H1 (cell line): ENCODE measurements at regions of chr1 and their contacts with region 1.

Region 1: DNA sequence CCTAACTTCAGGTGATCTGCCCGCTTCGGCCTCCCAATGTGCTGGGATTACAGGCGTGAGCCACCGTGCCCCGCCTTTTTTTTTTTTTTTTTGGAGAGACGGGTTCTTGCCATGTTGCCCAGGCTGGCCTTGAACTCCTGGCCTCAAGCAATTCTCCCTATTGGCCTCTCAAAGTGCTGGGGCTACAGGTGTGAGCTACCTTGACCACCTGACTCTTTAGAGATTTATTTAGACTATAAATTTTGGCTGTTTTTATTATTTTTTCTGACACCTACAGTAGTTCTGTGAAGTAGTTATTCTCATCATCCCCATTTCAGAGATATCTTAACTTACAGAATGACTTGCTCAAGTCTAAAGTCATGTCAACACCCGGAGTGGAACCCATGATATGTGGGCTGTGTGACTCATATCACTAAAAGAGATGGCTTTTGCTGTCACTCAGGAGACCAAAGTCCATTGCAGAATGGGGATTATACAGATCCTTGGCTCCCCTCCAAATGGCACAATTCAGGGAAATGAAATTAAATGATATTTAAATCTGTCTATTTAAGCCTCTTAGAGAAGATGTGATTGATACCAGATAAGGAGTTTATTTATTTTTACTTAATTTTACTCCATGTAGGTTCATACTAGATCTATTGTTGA is 93.2 kb downstream of the CTH start:
- DNase-seq: no peak
- H3K4me3 ChIP-seq: no peak overlapping the region
- H3K27ac ChIP-seq: no peak overlapping the region
- H3K4me1 ChIP-seq: no peaks in the 10 kb centered on the region
- H3K27me3 ChIP-seq: no peaks in the 10 kb centered on the region
- CTCF ChIP-seq: no peak
- EP300 ChIP-seq: no peak
- POLR2A ChIP-seq: no peak
- RAD21 ChIP-seq: no peak

Region 2: DNA sequence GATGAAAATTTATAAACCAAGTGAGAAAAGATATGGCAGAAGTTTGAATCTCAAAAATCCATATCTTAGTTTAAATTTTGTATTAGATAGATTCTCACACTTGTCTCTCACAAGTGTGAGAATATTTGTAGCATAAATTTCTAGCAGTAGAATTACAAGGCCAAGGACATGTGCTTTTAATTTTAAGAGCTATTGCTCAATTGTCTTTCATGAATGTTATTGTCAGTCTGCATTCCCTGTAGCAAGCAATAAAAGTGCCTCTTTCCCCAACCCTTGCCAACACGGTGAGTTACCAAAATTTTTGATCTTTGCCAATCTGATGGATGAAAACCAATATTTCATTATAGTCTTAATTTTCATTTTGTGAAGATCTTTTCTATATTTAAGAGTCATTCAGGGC is 29.3 kb before region 1 on chr1:
- CTCF ChIA-PET with region 1: no interaction called
- POLR2A ChIA-PET with region 1: no interaction called
- DNase-seq: no peak
- H3K4me3 ChIP-seq: no peak overlapping the region
- H3K27ac ChIP-seq: no peak overlapping the region
- H3K4me1 ChIP-seq: no peaks in the 10 kb centered on the region
- H3K27me3 ChIP-seq: no peaks in the 10 kb centered on the region
- CTCF ChIP-seq: no peak
- EP300 ChIP-seq: no peak
- POLR2A ChIP-seq: no peak
- RAD21 ChIP-seq: no peak

Region 3: DNA sequence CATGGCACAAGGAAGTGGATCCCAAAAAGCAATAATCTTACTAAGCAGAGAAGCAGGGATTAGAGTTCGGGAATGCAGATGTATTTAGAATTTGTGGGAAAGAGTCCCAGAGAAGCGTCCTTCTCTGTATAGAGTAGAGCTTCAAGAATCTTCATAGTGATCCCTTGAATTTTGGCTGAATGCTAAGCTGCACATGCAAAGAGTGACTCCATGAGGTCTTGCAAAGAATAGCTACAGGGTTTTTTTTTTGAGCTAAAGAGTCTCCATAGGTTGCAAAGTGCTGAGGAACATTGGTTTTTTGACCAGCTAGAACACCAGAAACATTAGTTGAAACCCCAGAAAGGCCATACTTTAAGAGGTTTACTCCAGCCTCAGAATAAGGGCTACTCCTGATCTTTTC is 113.4 kb after region 1 on chr1:
- CTCF ChIA-PET with region 1: interaction called, 10 read pairs
- POLR2A ChIA-PET with region 1: no interaction called
- DNase-seq: no peak
- H3K4me3 ChIP-seq: no peak overlapping the region
- H3K27ac ChIP-seq: no peak overlapping the region
- H3K4me1 ChIP-seq: no peaks in the 10 kb centered on the region
- H3K27me3 ChIP-seq: no peaks in the 10 kb centered on the region
- CTCF ChIP-seq: peak in 2 of 3 experiments; percentile 52 to 59; a peak in 3 of 4 replicates
- EP300 ChIP-seq: no peak
- POLR2A ChIP-seq: no peak
- RAD21 ChIP-seq: peak; percentile 79 to 85